Naive thymus-derived CD4-positive, alpha-beta T cell (primary cell): ENCODE measurements at regions of chr10 and their contacts with region 1.

Region 1: DNA sequence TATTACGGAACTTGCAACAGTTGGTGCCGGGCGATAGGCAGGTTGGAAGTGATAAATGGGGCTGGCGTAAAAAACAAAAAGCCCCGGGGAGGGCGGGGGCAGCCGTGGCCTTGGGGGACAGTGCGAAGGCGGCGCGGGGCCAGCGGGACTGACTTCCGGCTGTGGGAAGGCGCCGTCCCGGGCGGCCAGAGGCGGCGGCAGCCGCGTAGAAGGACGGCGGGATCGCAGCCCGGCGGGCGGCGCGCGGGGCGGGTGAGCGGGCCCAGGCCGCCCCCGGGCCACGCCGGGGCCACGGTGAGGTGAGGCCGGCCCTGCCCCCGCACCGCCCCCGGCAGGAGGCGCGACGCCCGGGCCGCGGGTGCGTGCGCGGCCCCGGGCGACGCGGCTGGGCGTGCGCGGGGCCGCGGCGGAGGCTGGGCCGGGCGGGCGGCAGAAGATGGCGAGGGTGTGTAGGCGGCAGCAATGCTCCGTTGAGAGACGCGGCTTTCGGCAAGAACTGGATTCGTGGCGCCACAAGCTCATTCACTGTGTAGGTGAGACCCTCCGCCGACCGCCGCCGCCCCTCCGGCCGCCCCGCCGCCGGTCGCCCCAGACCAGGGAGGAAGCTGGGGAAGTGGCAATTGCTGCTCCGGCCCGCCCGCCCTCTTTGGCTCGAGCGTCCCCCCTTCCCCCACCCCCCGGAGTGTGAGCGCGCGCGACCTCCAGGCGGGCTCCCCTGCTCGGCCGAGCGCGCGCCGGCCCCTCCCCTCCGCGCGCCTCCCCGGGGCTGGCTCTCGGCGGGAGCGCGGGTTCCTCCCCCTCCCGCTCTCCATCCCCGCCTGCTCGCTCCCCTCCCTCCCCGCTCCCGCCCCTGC is at the start of gene LCOR:
- DNase-seq: peak; percentile 75 to 88 (median 84)
- ATAC-seq: peak; percentile 85
- H3K4me3 ChIP-seq: peak within 1 kb of the TSS; percentile 65
- H3K4me3 Mint-ChIP-seq: peak within 1 kb of the TSS; percentile 84 to 96 (median 93)
- H3K27ac ChIP-seq: peak within 1 kb of the TSS; percentile 88
- H3K27ac Mint-ChIP-seq: peak within 1 kb of the TSS; percentile 88 to 99 (median 94)
- H3K4me1 ChIP-seq: peaks cover 25 to 26% of the 10 kb centered on the region in 2 donors
- H3K4me1 Mint-ChIP-seq: peaks cover 36 to 57% (median 51%) of the 10 kb centered on the region in 7 donors
- H3K27me3 ChIP-seq: no peaks in the 10 kb centered on the region
- H3K27me3 Mint-ChIP-seq: peaks cover 0 to 8% (median 0%) of the 10 kb centered on the region in 5 donors
- total RNA-seq, gene LCOR: 25.3 to 55.9 (median 51.8) TPM

Region 2: DNA sequence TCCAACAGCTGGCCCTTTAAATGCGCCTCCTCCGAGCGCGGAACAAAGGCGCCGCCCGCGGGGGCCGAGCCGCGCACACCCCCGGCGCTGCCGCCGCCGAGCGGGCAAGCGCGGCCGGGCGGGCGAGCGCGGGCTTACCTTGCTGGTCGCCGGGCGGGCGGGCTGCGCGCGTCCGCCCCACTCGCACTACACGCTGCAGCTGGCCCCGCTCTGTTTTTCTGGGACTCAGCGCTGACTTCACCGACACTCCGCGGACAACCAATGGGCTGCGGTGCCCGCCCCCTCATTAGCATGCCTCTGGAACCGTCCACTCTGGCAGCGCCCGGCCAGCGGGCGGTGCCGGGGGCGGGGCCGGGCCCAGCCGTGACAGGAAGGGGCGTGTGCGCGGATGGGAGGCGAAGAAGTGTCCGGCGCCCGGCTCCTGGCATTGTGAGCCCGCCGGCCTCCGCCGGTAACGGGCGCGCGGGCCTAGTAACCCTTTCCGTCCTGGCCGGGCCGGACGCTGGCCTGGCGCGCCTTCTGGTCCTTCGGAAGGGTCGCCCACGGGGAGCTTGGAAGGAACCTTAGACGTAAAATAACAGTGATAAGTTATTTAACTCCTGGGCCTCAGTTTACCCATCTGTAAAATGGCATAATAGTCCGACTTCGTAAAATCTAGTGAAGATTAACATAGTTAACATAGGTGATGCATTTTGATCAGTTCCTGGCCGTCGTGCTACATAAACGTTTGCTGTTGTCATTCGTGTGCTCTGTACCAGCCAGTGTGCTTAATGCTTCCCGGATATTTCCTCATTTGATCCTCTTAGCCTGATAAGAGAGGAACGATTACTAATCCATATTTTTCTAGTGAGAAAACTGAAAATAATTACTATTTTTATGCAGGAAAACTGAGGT is 1270.7 kb before region 1 on chr10 and contains the start of gene SORBS1:
- CTCF ChIA-PET with region 1: no interaction called
- POLR2A ChIA-PET with region 1: no interaction called
- intact Hi-C with region 1: loop called in 1 of 2 experiments (anchors 2 kb)
- DNase-seq: peak; percentile 80 to 88 (median 82)
- ATAC-seq: peak; percentile 99
- H3K4me3 ChIP-seq: peak within 1 kb of the TSS; percentile 90
- H3K4me3 Mint-ChIP-seq: peak within 1 kb of the TSS; percentile 96 to 100 (median 99)
- H3K27ac ChIP-seq: peak within 1 kb of the TSS; percentile 66
- H3K27ac Mint-ChIP-seq: peak within 1 kb of the TSS; percentile 76 to 97 (median 89)
- H3K4me1 ChIP-seq: peaks cover 4% of the 10 kb centered on the region in 2 donors
- H3K4me1 Mint-ChIP-seq: peaks cover 7 to 16% (median 11%) of the 10 kb centered on the region in 7 donors
- H3K27me3 ChIP-seq: no peaks in the 10 kb centered on the region
- H3K27me3 Mint-ChIP-seq: peaks cover 0 to 63% (median 5%) of the 10 kb centered on the region in 5 donors
- total RNA-seq, gene SORBS1: 0.58 to 1.9 (median 1.4) TPM

Region 3: DNA sequence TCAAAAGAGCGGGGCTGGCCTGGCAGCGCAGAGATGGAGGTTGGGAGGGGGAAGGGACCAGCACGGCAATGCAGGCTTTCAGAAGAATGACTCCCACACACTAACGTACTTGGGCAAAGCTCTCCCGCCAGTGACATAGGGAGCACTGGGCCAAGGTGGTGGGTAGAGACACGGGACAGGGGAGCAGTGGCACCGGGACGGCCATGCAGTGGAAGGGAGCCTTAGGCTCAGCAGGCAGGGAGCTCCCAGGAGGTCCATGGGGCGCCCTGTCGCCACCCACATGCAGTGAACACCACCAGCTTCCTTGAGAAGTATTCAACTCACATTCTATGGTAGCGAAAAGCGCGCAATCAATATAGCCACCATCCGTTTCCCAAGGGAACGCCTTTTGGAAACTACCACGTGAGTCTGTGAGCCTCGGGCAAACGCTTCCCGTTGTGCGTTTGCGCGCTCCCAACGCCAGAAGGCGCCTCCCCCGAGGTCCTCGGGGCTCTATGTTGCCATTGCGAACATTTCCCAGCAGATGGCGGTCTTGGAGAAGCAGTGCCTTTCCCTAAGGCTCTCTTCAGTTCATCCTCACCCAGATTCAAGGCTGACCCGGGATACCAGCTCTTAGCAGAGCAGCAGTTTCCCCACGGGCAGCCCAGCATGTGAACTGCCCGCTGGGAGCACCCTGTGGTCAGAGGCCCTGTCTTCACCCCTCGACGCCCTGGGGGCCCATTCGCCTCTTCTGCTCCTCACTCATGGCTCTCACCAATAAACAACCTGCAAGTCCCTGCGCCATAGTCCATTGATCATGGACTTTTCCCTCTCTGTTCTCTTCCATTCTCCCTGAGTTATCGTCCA is 456.9 kb before region 1 on chr10:
- CTCF ChIA-PET with region 1: no interaction called
- POLR2A ChIA-PET with region 1: no interaction called
- intact Hi-C with region 1: loop called (anchors 2 to 5 kb)
- DNase-seq: peak; percentile 23 to 75 (median 58)
- ATAC-seq: peak; percentile 92
- H3K4me3 ChIP-seq: peak overlapping the region; percentile 68
- H3K4me3 Mint-ChIP-seq: peak overlapping the region; percentile 60 to 90 (median 83)
- H3K27ac ChIP-seq: no peak overlapping the region
- H3K27ac Mint-ChIP-seq: peak overlapping the region in 1 of 9 donors; percentile 6
- H3K4me1 ChIP-seq: no peaks in the 10 kb centered on the region
- H3K4me1 Mint-ChIP-seq: peaks cover 0 to 14% (median 6%) of the 10 kb centered on the region in 7 donors
- H3K27me3 ChIP-seq: no peaks in the 10 kb centered on the region
- H3K27me3 Mint-ChIP-seq: peaks cover 0 to 13% (median 9%) of the 10 kb centered on the region in 5 donors

Region 4: DNA sequence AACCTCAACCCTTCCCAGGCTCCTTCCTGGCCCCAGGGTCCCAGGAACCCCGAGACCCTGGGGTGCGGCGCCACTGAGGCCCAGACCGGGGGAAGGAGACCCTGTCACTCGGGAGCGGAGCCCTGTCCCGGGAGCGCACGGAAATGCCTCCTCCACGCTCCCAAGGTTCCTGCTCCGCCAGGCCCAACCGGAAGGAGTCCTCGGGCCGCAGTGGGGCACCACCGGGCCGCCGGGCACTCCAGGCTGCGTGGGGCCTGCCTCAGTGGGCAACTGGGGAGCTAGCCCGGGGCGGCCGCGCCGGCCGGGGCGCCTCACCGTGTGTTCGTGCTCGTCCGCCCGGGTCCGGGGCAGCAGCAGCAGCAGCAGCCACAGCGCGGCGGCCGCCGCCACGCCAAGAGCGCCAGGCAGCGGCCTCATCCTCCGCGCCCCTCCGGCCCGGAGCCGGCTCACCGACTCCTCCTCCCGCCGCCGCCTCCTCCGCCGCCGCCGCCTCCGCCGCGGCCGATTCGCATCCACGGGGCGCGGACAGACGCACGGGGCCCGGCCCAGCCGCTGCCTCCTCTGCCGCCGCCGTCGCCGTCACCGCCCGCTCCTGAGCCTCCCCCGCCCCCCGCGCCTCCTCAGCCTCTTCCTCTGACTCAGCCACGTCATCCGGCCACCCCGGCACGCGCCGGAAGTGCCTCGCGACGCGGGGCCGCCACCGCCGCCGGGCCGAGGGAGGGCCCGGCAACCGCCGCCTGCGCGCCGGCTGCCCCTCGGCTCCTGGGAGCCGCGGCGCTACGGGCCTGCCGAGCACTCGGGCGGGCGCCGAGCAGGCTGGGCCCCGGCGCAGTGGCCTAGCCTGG is 245.5 kb before region 1 on chr10 and contains the start of gene TM9SF3:
- CTCF ChIA-PET with region 1: no interaction called
- POLR2A ChIA-PET with region 1: interaction called, 5 read pairs
- intact Hi-C with region 1: loop called (anchors 1 kb)
- DNase-seq: peak; percentile 86 to 91 (median 89)
- ATAC-seq: peak; percentile 93
- H3K4me3 ChIP-seq: peak within 1 kb of the TSS; percentile 83
- H3K4me3 Mint-ChIP-seq: peak within 1 kb of the TSS in 8 of 10 donors; percentile 82 to 97 (median 92)
- H3K27ac ChIP-seq: peak within 1 kb of the TSS; percentile 100
- H3K27ac Mint-ChIP-seq: peak within 1 kb of the TSS in 8 of 9 donors; percentile 89 to 99 (median 95)
- H3K4me1 ChIP-seq: peaks cover 28 to 32% of the 10 kb centered on the region in 2 donors
- H3K4me1 Mint-ChIP-seq: peaks cover 26 to 47% (median 40%) of the 10 kb centered on the region in 7 donors
- H3K27me3 ChIP-seq: no peaks in the 10 kb centered on the region
- H3K27me3 Mint-ChIP-seq: peaks cover 0 to 13% (median 0%) of the 10 kb centered on the region in 5 donors
- total RNA-seq, gene TM9SF3: 76.7 to 94.0 (median 83.5) TPM

Region 5: GRCh38 chr10:96863922-96864543 is 31.9 kb after region 1 on chr10:
- CTCF ChIA-PET with region 1: no interaction called
- POLR2A ChIA-PET with region 1: no interaction called
- intact Hi-C with region 1: no loop called
- DNase-seq: no peak
- ATAC-seq: no peak
- H3K4me3 ChIP-seq: no peak overlapping the region
- H3K4me3 Mint-ChIP-seq: no peak overlapping the region
- H3K27ac ChIP-seq: no peak overlapping the region
- H3K27ac Mint-ChIP-seq: peak overlapping the region in 1 of 9 donors; percentile 59
- H3K4me1 ChIP-seq: no peaks in the 10 kb centered on the region
- H3K4me1 Mint-ChIP-seq: peaks cover 17 to 63% (median 58%) of the 10 kb centered on the region in 7 donors
- H3K27me3 ChIP-seq: no peaks in the 10 kb centered on the region
- H3K27me3 Mint-ChIP-seq: no peaks in the 10 kb centered on the region

Region 6: DNA sequence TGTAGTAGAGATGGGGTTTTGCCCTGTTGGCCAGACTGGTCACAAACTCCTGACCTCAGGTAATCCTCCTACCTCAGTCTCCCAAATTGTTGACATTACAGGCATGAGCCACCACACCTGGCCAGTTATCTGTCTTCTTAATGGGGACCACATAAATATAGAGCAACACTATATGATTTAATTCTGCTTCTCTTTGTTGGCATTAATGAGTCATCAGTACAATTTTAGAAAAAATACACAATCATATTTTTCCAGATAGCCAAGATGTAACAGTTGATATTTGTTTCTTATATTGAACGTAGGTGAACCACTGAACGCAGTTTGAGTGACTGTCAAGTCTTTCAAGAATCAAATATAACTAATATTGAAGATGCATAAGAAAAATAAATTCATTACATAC is 48.5 kb after region 1 on chr10:
- CTCF ChIA-PET with region 1: no interaction called
- POLR2A ChIA-PET with region 1: no interaction called
- intact Hi-C with region 1: loop called in 1 of 2 experiments (anchors 1 kb)
- DNase-seq: no peak
- ATAC-seq: no peak
- H3K4me3 ChIP-seq: no peak overlapping the region
- H3K4me3 Mint-ChIP-seq: no peak overlapping the region
- H3K27ac ChIP-seq: no peak overlapping the region
- H3K27ac Mint-ChIP-seq: peak overlapping the region in 1 of 9 donors; percentile 2
- H3K4me1 ChIP-seq: peaks cover 3 to 6% of the 10 kb centered on the region in 2 donors
- H3K4me1 Mint-ChIP-seq: peaks cover 17 to 71% (median 61%) of the 10 kb centered on the region in 7 donors
- H3K27me3 ChIP-seq: no peaks in the 10 kb centered on the region
- H3K27me3 Mint-ChIP-seq: no peaks in the 10 kb centered on the region

Region 7: GRCh38 chr10:97498076-97498840 is 666.2 kb after region 1 on chr10 and contains the start of gene MMS19:
- CTCF ChIA-PET with region 1: no interaction called
- POLR2A ChIA-PET with region 1: no interaction called
- intact Hi-C with region 1: loop called (anchors 5 to 10 kb)
- DNase-seq: peak; percentile 99 to 100 (median 100)
- ATAC-seq: peak; percentile 89
- H3K4me3 ChIP-seq: peak within 1 kb of the TSS; percentile 96
- H3K4me3 Mint-ChIP-seq: peak within 1 kb of the TSS; percentile 85 to 99 (median 98)
- H3K27ac ChIP-seq: peak within 1 kb of the TSS; percentile 81
- H3K27ac Mint-ChIP-seq: peak within 1 kb of the TSS; percentile 94 to 98 (median 97)
- H3K4me1 ChIP-seq: peaks cover 20 to 41% of the 10 kb centered on the region in 2 donors
- H3K4me1 Mint-ChIP-seq: peaks cover 28 to 65% (median 49%) of the 10 kb centered on the region in 7 donors
- H3K27me3 ChIP-seq: no peaks in the 10 kb centered on the region
- H3K27me3 Mint-ChIP-seq: peaks cover 0 to 34% (median 21%) of the 10 kb centered on the region in 5 donors
- total RNA-seq, gene MMS19: 68.7 to 113 (median 87.9) TPM